Gastrocnemius medialis (tissue), 4 donors: ENCODE measurements at regions of chr2 and their contacts with region 1.

Region 1: DNA sequence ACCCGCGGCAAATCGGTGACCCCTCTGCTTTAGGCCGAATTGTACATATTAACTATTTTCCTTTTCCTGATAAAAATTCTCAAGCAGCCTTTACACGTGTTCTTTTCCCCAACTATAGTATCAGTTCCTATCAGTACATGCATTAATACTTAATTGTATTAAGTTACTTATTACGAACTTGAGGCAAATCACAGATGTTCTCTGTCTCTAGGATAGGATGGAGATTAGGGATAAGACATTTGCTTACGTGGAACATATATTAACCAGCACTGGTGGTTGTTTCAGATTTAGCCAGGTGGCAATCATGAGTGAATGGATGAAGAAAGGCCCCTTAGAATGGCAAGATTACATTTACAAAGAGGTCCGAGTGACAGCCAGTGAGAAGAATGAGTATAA is 675 bp downstream of the GEMIN6 start:
- DNase-seq: no peak
- ATAC-seq: no peak
- H3K4me3 ChIP-seq: peak overlapping the region; percentile 58 to 89 (median 80)
- H3K27ac ChIP-seq: peak overlapping the region; percentile 54 to 81 (median 75)
- H3K4me1 ChIP-seq: peaks cover 9 to 10% of the 10 kb centered on the region in 2 donors
- H3K27me3 ChIP-seq: no peaks in the 10 kb centered on the region
- CTCF ChIP-seq: no peak
- POLR2A ChIP-seq: no peak

Region 2: DNA sequence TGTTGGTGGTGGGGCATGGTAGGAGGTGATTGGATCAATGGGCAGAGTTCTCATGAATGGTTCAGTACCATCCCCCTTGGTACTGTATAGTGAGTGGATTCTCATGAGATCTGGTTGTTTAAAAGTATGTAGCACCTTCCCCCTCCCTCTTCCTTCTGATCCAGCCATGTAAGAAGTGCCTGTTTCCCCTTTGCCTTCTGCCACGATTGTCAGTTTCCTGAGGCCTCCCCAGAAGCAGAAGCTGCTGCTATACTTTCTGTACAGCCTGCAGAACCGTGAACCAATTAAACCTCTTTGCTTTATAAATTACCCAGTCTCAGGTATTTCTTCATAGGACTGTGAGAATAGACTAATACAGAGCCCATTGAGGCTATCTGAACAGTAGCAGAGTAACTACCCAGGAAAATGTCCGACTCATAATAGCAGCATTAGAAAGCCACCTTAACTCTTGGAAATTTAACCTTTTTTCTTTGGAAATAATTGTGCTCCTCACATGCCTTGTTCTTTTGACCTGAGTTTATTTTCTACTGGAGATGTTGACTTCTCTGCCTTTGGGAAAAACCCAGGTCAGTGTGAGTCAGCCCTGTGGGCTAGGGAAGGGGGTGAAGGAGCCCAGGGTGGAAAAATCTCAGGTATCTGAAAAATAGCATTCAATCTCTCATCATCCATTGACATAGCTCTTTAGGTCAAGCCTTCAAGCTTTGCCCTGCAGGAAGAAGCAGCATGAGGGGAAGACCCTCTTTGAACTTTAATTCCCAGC is 720.9 kb before region 1 on chr2:
- in situ Hi-C with region 1: no loop called
- intact Hi-C with region 1: no loop called
- DNase-seq: no peak
- ATAC-seq: no peak
- H3K4me3 ChIP-seq: no peak overlapping the region
- H3K27ac ChIP-seq: no peak overlapping the region
- H3K4me1 ChIP-seq: no peaks in the 10 kb centered on the region
- H3K27me3 ChIP-seq: no peaks in the 10 kb centered on the region
- CTCF ChIP-seq: no peak
- POLR2A ChIP-seq: no peak

Region 3: DNA sequence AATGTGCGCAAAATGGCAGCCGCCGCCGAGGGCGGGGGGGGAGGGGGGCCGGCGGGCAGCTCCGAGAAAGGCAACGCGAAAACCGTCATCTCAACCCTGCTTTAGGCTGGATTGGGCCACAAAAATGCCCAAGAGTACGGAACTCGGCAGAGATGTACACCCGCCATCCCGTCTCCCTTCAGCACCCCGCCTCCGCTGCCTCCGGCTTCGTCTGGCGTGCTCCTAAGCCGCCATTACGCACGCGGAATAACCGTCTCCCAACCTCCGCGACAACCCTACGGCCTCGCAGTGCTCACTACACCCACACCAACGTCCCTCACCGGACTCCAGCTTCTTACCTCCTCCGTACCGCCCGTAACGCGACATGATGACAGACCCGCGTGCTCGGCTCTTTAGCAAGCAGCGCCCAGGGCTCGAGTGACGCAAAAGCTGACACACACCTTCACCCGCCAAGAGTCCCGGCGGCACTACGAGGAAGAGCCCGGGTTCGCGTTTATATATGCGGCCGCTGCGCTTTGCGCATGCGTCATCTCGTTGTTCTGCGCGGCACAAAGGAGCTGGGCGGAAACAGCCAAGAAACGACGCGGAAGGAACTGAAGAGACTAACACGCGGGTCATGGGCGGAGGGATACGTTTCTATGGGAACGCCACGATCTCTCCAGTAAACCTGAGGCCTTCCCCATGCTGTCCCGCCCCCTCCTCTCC is 27.6 kb before region 1 on chr2 and contains the start of gene SRSF7:
- in situ Hi-C with region 1: no loop called
- intact Hi-C with region 1: loop called (anchors 1 kb)
- DNase-seq: peak; percentile 96 to 97
- ATAC-seq: peak; percentile 94 to 96
- H3K4me3 ChIP-seq: peak within 1 kb of the TSS; percentile 72 to 88 (median 82)
- H3K27ac ChIP-seq: peak within 1 kb of the TSS; percentile 96 to 98 (median 97)
- H3K4me1 ChIP-seq: peaks cover 24 to 26% of the 10 kb centered on the region in 2 donors
- H3K27me3 ChIP-seq: no peaks in the 10 kb centered on the region
- CTCF ChIP-seq: no peak
- POLR2A ChIP-seq: peak; percentile 100
- total RNA-seq, gene SRSF7: 21.5 to 51.4 (median 34.1) TPM

Region 4: GRCh38 chr2:38875576-38876367 is 97.1 kb after region 1 on chr2 and contains the starts of genes DHX57 and MORN2:
- in situ Hi-C with region 1: no loop called
- intact Hi-C with region 1: loop called (anchors 2 kb)
- DNase-seq: peak; percentile 82 to 86
- ATAC-seq: peak; percentile 97
- H3K4me3 ChIP-seq: peak within 1 kb of the TSS; percentile 79 to 96 (median 94)
- H3K27ac ChIP-seq: peak within 1 kb of the TSS; percentile 68 to 79 (median 74)
- H3K4me1 ChIP-seq: peaks cover 13 to 16% of the 10 kb centered on the region in 2 donors
- H3K27me3 ChIP-seq: no peaks in the 10 kb centered on the region
- CTCF ChIP-seq: no peak
- POLR2A ChIP-seq: peak in 1 of 2 donors; percentile 25
- total RNA-seq, gene DHX57: 11.5 to 12.0 (median 11.7) TPM
- total RNA-seq, gene MORN2: 12.9 to 16.7 (median 13.8) TPM